IMR-90 (cell line): ENCODE measurements at regions of chr10 and their contacts with region 1.

Region 1: DNA sequence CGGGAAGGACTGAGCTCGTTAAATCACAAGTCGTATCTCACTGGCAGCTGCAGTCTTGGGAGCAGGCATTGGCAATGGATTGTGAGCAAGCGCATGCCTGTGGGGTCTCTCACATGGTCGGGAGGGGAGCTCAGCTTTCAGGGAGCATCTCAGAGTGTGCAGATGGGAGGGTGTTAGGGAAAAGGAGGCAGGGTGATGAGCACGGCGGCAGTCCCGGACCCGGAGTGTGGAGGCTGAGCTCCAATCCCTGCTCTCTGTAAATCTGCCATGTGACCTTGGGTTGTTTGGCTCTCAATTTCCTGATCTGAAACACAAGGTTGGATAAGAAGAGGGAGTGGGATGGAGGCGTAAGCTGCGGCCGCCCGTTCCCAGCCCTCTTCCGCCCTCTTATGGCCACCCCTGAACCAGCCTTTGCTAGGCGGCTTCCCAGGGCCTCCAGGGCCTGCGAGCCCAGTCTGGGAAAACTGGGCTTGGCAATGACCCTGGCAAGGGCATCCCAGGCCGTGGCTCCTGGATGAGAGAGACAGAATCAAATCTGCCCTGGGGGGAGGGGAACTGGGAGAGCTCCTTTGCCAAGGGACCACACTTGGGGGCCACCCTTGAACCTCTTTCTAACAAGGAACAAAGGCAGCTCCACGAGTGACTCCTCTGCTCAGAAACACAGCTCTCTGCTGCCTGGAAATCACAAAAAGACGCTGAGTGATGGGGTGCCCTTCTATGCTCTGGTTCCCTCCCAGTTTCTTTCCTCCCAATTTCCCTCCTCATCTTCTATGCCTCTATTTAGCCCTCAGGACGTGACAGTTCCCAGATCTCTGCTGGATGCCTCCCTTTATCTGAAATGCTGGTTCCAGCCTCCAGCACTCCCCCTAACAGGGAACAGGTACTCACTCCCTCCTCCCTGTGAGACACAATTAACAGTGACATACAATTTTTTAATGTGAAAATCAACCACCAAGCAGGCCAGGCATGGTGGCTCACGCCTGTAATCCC is 41.7 kb upstream of the LOXL4 start:
- DNase-seq: peak; percentile 87
- ATAC-seq: peak; percentile 99
- H3K4me3 ChIP-seq: peak overlapping the region; percentile 8; the same call in 1 of the 2 replicates
- H3K27ac ChIP-seq: peak overlapping the region; percentile 18
- H3K4me1 ChIP-seq: peaks cover 7% of the 10 kb centered on the region
- H3K27me3 ChIP-seq: peaks cover 2% of the 10 kb centered on the region; the same call in 1 of the 2 replicates
- CTCF ChIP-seq: peak; percentile 94
- POLR2A ChIP-seq: no peak
- RAD21 ChIP-seq: peak; percentile 95

Region 2: DNA sequence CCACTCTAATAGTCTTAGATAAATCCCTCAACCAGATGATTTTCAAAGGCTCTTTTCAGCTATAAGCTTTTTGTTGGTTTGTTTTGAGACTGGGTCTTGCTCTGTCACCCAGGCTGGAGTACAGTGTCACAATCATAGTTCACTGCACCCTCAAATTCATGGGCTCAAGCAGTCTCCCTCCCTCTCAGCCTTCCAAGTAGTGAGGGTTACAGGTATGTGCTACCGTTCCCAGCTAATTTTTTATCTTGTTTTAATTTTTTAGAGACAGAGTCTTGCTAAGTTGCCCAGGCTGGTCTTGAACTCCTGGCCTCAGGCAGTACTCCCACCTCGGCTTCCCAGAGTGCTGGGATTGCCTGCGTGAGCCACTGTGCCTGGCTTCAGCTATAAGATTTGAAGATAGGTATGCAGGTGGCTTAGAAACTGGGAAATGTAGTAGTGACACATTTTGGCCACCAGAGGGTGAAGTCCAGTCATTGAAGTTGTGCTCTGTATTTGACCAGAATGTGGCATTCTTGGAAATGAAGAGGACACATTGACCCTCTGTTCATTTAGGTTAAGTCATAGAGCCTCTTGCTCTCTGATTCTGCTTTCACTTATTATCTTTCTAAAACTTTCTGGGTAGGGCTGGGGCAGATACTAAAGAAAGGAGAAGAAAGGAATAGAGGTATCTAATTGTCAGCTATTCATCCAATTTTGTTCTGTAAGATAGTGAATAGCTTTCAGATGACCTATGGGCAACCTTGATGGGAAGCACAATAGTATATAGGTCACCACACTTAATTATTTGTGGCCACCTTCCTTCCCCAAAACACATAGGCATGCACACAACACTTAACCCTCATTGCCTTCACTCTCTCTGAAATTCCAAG is 139.2 kb before region 1 on chr10:
- CTCF ChIA-PET with region 1: interaction called, 19 read pairs
- POLR2A ChIA-PET with region 1: interaction called, 4 read pairs
- dilution Hi-C with region 1: no loop called
- in situ Hi-C with region 1: loop called (anchors 10 kb)
- intact Hi-C with region 1: loop called (anchors 1 kb)
- DNase-seq: peak; percentile 60
- ATAC-seq: peak; percentile 83
- H3K4me3 ChIP-seq: no peak overlapping the region
- H3K27ac ChIP-seq: no peak overlapping the region
- H3K4me1 ChIP-seq: no peaks in the 10 kb centered on the region
- H3K27me3 ChIP-seq: no peaks in the 10 kb centered on the region
- CTCF ChIP-seq: peak; percentile 65
- POLR2A ChIP-seq: no peak
- RAD21 ChIP-seq: peak; percentile 62

Region 3: GRCh38 chr10:98242823-98243222 is 66.8 kb before region 1 on chr10:
- CTCF ChIA-PET with region 1: interaction called, 23 read pairs
- POLR2A ChIA-PET with region 1: interaction called, 4 read pairs
- dilution Hi-C with region 1: no loop called
- in situ Hi-C with region 1: loop called (anchors 5 kb)
- intact Hi-C with region 1: loop called (anchors 1 kb)
- DNase-seq: peak; percentile 56
- ATAC-seq: peak; percentile 44; the same call in 1 of the 2 replicates
- H3K4me3 ChIP-seq: no peak overlapping the region
- H3K27ac ChIP-seq: no peak overlapping the region
- H3K4me1 ChIP-seq: peaks cover 18% of the 10 kb centered on the region
- H3K27me3 ChIP-seq: no peaks in the 10 kb centered on the region
- CTCF ChIP-seq: peak; percentile 61
- POLR2A ChIP-seq: no peak
- RAD21 ChIP-seq: peak; percentile 71

Region 4: GRCh38 chr10:98262571-98262970 is 47.1 kb before region 1 on chr10:
- CTCF ChIA-PET with region 1: interaction called, 6 read pairs
- POLR2A ChIA-PET with region 1: interaction called, 15 read pairs
- dilution Hi-C with region 1: no loop called
- in situ Hi-C with region 1: no loop called
- intact Hi-C with region 1: no loop called
- DNase-seq: peak; percentile 36
- ATAC-seq: peak; percentile 43; the same call in 1 of the 2 replicates
- H3K4me3 ChIP-seq: no peak overlapping the region
- H3K27ac ChIP-seq: no peak overlapping the region
- H3K4me1 ChIP-seq: peaks cover 12% of the 10 kb centered on the region
- H3K27me3 ChIP-seq: no peaks in the 10 kb centered on the region
- CTCF ChIP-seq: peak; percentile 51
- POLR2A ChIP-seq: no peak
- RAD21 ChIP-seq: peak; percentile 68

Region 5: GRCh38 chr10:98269072-98269912 is 40.4 kb before region 1 on chr10:
- CTCF ChIA-PET with region 1: interaction called, 5 read pairs
- POLR2A ChIA-PET with region 1: interaction called, 3 read pairs
- dilution Hi-C with region 1: no loop called
- in situ Hi-C with region 1: no loop called
- intact Hi-C with region 1: loop called (anchors 2 kb)
- DNase-seq: peak; percentile 73
- ATAC-seq: peak; percentile 59
- H3K4me3 ChIP-seq: no peak overlapping the region
- H3K27ac ChIP-seq: 0 out of 2 replicates have a peak overlapping the region, but pooled peaks have one; percentile 8
- H3K4me1 ChIP-seq: peaks cover 22% of the 10 kb centered on the region
- H3K27me3 ChIP-seq: peaks cover 2% of the 10 kb centered on the region; the same call in 1 of the 2 replicates
- CTCF ChIP-seq: no peak
- POLR2A ChIP-seq: no peak
- RAD21 ChIP-seq: no peak

Region 6: GRCh38 chr10:98391578-98391991 is 81.9 kb after region 1 on chr10:
- CTCF ChIA-PET with region 1: no interaction called
- POLR2A ChIA-PET with region 1: no interaction called
- dilution Hi-C with region 1: no loop called
- in situ Hi-C with region 1: no loop called
- intact Hi-C with region 1: loop called (anchors 1 kb)
- DNase-seq: peak; percentile 49
- ATAC-seq: peak; percentile 28; the same call in 1 of the 2 replicates
- H3K4me3 ChIP-seq: no peak overlapping the region
- H3K27ac ChIP-seq: no peak overlapping the region
- H3K4me1 ChIP-seq: peaks cover 5% of the 10 kb centered on the region; the same call in 1 of the 2 replicates
- H3K27me3 ChIP-seq: no peaks in the 10 kb centered on the region
- CTCF ChIP-seq: no peak
- POLR2A ChIP-seq: no peak
- RAD21 ChIP-seq: no peak